Heart left ventricle (tissue), 16 donors: ENCODE measurements at regions of chr14 and their contacts with region 1.

Region 1: DNA sequence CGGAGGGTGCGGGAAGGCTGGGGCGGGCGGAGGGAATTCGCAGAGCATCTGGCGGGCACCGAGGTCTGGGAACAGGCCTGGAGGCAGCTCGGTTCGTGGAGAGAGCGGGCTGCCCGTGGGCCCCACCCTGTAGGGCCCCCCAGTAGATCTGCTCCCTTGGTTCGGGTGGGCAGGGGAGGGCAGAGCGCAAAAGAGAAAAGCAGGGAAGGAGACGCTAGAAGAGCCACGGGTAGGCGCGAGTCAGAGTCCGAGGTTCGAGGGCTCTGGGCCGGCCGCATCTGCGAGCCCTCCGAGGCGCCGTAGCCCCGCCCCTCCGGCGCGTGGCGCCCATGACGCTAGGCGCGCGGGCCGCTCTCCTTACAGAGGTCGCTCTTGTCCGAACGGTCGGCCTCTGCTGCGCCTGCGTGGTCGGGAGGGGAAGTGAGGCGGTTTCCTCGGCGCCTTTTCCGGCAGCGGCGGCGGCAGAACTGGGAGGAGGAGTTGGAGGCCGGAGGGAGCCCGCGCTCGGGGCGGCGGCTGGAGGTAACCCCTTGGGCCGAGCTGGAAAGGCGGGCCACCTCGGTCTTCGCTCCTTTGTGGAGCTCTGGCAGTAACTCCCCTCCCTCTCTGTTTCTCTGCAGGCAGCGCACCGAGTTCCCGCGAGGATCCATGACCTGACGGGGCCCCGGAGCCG is at the start of gene ARF6:
- DNase-seq: peak; percentile 99 to 100 (median 99)
- ATAC-seq: peak; percentile 98 to 99 (median 99)
- H3K4me3 ChIP-seq: peak within 1 kb of the TSS; percentile 77 to 99 (median 92)
- H3K27ac ChIP-seq: peak within 1 kb of the TSS; percentile 97 to 100 (median 100)
- H3K4me1 ChIP-seq: peaks cover 14 to 49% (median 39%) of the 10 kb centered on the region in 12 donors
- H3K27me3 ChIP-seq: no peaks in the 10 kb centered on the region
- CTCF ChIP-seq: peak in 5 of 12 donors; percentile 16 to 43 (median 25)
- POLR2A ChIP-seq: peak; percentile 51 to 94
- total RNA-seq, gene ARF6: 20.8 to 49.3 (median 27.4) TPM

Region 2: GRCh38 chr14:49851813-49852212 is 41.0 kb before region 1 on chr14:
- intact Hi-C with region 1: no loop called
- DNase-seq: no peak
- ATAC-seq: no peak
- H3K4me3 ChIP-seq: peak overlapping the region; percentile 55 to 97 (median 79)
- H3K27ac ChIP-seq: peak overlapping the region in 9 of 12 donors; percentile 82 to 98 (median 91)
- H3K4me1 ChIP-seq: peaks cover 0 to 39% (median 16%) of the 10 kb centered on the region in 12 donors
- H3K27me3 ChIP-seq: no peaks in the 10 kb centered on the region
- CTCF ChIP-seq: no peak
- POLR2A ChIP-seq: no peak

Region 3: DNA sequence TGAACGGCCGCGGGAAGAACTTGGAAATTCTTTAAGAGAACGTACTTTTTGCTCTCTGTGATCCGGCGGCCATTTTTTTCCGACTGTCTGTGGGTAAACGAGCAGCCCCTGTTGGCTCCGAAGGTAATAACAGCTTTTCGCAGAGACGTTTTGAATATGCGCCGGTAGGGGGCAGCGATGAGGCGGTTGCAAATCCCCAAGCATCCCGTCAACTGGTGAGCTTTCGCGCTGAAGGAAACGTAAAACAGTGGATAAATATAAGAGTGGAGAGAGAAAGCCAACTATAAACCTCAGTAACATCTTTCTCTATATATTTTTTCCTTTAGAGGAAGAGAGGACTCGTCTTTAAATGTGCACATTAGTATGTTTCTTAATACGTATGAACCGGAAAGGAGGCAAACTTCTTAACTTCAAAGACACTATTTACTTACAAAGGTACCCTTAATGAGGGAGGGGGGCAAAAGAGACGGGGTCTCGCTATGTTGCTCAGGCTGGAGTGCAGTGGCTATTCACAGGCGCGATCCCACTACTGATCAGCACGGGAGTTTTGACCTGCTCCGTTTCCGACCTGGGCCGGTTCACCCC is 30.6 kb before region 1 on chr14:
- intact Hi-C with region 1: loop called in 1 of 10 experiments (anchors 1 kb)
- DNase-seq: peak; percentile 79 to 87 (median 86)
- ATAC-seq: peak; percentile 33 to 60 (median 51)
- H3K4me3 ChIP-seq: peak overlapping the region; percentile 26 to 91 (median 70)
- H3K27ac ChIP-seq: peak overlapping the region; percentile 97 to 99 (median 98)
- H3K4me1 ChIP-seq: peaks cover 0 to 47% (median 12%) of the 10 kb centered on the region in 12 donors
- H3K27me3 ChIP-seq: no peaks in the 10 kb centered on the region
- CTCF ChIP-seq: peak; percentile 99 to 100 (median 100)
- POLR2A ChIP-seq: no peak

Region 4: DNA sequence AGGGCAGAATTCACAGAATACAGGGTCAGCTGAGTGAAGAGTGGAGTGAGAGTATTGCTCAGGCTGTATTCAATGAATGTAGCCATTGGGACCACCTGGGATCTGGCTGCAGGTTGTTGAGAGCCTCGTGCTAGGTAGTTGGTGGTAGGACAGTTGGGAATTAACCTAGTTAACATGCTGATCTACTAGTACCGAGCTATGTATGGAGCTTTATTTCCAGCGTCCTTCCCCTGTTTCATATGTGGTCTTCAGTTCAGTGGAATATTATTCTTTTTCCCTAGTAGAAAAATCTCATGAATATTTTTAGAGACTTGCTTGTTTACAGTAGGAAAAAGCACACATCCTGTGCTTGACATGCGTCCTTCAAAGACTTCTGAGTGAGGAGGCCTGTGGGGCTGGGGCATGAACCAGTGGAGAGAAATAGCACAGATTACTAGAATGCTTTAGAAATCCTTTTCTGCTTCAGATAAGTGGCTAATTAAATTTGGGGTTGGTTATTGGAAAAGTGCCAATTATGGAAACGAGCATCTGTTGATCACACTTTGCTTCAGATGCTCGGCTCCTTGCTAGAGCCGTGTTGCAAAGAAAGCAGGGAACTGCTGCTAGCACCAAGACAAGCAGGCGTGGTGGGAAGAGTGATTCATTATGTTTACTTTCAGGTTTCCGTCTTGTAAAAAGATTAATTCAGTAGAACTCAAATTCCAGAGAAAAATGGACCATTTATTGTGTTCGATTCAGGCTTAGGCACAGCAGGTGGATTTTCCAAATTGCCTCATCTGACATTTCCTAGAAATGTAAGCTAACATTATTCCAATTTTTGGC is 53.8 kb after region 1 on chr14:
- intact Hi-C with region 1: loop called in 1 of 10 experiments (anchors 5 kb)
- DNase-seq: peak in 2 of 5 donors; percentile 25 to 28
- ATAC-seq: peak in 3 of 4 donors; percentile 60 to 84 (median 72)
- H3K4me3 ChIP-seq: no peak overlapping the region
- H3K27ac ChIP-seq: peak overlapping the region in 8 of 12 donors; percentile 33 to 73 (median 47)
- H3K4me1 ChIP-seq: peaks cover 0 to 38% (median 13%) of the 10 kb centered on the region in 12 donors
- H3K27me3 ChIP-seq: no peaks in the 10 kb centered on the region
- CTCF ChIP-seq: no peak
- POLR2A ChIP-seq: no peak

Region 5: DNA sequence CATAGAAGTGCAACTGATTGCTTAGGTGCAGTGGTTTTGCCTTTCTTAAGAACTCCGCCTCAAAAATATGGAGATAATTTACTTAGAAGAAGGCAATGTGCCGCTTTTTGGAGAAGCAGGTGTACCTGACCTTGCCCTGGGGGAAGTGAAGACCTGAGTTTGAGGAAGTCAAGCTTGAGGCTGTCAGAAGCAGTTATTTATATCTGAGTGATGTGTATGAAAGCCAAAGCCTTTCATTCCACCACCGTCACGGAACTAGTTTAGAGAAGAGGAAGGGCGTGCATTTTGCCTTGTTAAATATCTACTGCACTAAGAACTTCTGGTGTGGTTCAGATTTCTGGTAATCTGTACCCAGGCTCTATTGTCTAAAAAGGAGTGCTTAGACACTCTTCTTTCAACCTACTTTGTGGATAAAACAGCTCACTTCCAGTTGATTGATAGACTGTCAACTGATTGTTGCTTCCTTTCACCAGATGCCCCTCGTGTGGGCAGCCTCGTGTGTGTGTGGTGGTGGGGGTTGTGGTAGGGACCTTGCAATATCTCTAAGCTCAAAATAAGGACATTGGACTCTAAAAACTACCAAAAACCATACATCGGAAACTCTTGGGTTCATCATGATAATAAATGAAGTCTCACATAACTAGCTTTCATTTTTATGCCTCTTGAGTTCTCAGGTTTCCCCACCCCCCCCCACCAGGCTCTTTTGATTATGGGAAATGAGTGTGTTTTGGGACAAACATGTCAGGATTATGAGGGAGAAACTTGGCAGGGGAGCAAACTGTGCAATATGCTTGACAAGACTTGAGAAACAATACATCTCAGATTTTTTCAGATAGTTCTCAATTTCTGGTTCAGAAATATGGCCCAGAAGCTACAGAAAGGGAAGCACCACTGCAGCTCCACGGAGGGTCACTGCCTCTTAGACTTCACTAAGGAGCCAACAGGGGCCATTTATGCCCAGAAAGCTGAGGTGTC is 78.7 kb after region 1 on chr14:
- intact Hi-C with region 1: loop called in 1 of 10 experiments (anchors 2 kb)
- DNase-seq: no peak
- ATAC-seq: peak; percentile 19 to 75 (median 61)
- H3K4me3 ChIP-seq: peak overlapping the region in 1 of 12 donors; percentile 18
- H3K27ac ChIP-seq: peak overlapping the region in 11 of 12 donors; percentile 40 to 95 (median 64)
- H3K4me1 ChIP-seq: peaks cover 4 to 62% (median 37%) of the 10 kb centered on the region in 12 donors
- H3K27me3 ChIP-seq: no peaks in the 10 kb centered on the region
- CTCF ChIP-seq: no peak
- POLR2A ChIP-seq: no peak

Region 6: DNA sequence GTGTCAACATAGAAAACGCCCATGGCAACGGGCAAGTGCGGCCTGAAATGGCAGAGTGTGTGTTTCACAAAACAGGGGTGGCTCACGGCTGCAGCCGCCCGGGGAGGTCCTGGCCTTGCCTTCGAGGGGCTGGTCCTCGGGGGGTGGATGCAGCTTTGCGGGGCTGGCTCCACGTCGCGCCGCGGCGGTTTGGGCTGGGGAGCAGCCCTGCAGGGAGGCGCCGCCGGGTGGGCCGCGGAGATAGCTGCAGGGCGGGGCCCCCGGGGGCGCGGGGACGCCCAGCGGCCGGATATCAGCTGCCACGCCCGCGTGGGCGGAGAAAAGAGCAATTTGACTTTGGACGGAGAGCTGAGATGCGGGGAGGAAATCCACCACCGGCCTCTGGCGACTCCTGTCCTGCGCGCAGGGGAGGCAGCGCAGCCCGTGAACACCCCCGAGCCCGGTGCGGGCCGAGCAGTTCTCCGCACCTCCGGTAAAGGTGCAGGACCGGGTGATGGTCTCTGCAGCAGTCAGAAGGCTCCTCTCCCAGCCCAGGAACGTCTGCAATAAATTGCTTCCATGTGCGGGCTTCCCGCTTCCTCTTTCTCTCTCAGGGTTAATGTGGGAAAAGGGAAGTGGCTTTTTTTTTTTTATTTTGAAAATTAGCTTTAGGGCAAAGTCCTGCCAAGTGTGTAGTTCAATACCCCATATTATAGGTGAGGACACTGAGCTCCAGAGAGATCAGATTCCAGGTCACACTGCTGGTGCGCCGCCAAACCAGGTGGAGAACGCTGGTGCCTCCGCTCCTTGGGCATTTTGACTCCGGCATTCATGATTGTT is 110.7 kb after region 1 on chr14:
- intact Hi-C with region 1: loop called in 9 of 10 experiments (anchors 2 to 10 kb)
- DNase-seq: peak; percentile 84 to 92 (median 87)
- ATAC-seq: peak in 3 of 4 donors; percentile 47 to 78 (median 56)
- H3K4me3 ChIP-seq: peak overlapping the region; percentile 28 to 80 (median 58)
- H3K27ac ChIP-seq: peak overlapping the region; percentile 43 to 92 (median 80)
- H3K4me1 ChIP-seq: peaks cover 0 to 60% (median 48%) of the 10 kb centered on the region in 12 donors
- H3K27me3 ChIP-seq: no peaks in the 10 kb centered on the region
- CTCF ChIP-seq: peak in 7 of 12 donors; percentile 8 to 50 (median 30)
- POLR2A ChIP-seq: peak in 1 of 2 donors; percentile 61

Region 7: DNA sequence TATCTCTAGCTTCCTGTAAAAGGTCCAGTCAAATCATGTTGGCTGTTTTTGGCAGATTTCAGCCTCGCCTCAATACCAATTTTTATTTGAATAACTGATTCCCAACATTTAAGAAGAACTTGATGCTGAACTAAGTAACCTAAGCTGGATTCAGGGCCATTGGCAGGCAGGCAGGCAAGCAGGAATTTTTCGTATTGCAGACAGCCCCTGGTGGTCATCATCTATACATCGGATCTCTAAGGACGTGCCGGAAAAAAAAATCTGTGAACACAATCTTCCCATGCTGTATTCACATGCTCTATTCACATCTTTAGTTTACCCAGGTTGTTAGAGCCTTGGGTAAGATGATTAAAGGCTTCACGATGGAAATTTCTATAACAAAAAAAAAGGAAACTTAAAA is 216.6 kb after region 1 on chr14:
- intact Hi-C with region 1: loop called in 4 of 10 experiments (anchors 1 to 10 kb)
- DNase-seq: no peak
- ATAC-seq: no peak
- H3K4me3 ChIP-seq: no peak overlapping the region
- H3K27ac ChIP-seq: no peak overlapping the region
- H3K4me1 ChIP-seq: peaks cover 0 to 6% (median 2%) of the 10 kb centered on the region in 12 donors
- H3K27me3 ChIP-seq: no peaks in the 10 kb centered on the region
- CTCF ChIP-seq: no peak
- POLR2A ChIP-seq: no peak

Region 8: DNA sequence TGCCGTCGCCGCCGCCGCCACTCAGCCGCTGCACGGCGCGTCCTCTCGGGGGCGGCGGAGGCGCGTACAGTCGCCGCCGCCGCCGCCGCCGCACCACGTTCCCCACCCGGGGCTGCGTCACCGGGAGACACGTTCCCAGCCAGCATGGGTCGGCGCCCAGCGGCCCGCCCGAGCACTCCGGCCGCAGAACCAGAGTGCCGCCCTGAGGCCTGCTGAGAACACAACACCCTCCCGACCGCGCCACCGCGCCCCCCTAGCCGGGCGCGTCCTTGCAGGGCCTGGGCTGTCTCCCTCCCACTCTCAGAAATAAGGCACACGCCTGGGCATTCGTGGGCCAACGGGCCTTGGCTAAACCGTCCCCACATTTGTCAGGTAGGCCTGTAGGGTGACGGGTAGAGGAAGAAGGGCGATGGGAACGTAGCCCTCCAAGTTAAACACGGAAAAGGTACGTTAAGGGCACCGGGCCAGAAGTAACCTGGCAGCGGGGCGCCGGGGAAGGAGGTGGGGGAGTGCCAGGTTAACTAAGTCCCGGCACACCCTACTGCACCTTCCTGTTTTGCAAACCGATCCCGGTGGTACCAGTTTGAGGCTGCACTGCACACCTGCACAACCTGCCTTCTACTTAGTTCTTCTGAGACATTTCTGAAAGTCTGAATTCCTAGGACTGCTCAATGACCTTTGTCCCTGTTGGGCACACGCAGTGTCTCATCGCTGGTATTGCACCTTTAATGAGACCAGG is 639.9 kb after region 1 on chr14 and contains the start of gene MAP4K5:
- intact Hi-C with region 1: loop called in 1 of 10 experiments (anchors 10 kb)
- DNase-seq: peak; percentile 91 to 96 (median 93)
- ATAC-seq: peak; percentile 97 to 100 (median 100)
- H3K4me3 ChIP-seq: peak within 1 kb of the TSS; percentile 72 to 98 (median 90)
- H3K27ac ChIP-seq: peak within 1 kb of the TSS; percentile 78 to 98 (median 94)
- H3K4me1 ChIP-seq: peaks cover 5 to 44% (median 25%) of the 10 kb centered on the region in 12 donors
- H3K27me3 ChIP-seq: no peaks in the 10 kb centered on the region
- CTCF ChIP-seq: peak; percentile 79 to 96 (median 93)
- POLR2A ChIP-seq: peak in 1 of 2 donors; percentile 85
- total RNA-seq, gene MAP4K5: 9.0 to 43.3 (median 16.6) TPM